HepG2 (cell line): ENCODE measurements at regions of chr4 and their contacts with region 1.

Region 1: GRCh38 chr4:145618932-145619638 is at the start of gene MMAA:
- DNase-seq: peak; percentile 83
- ATAC-seq: peak; percentile 99
- H3K4me3 ChIP-seq: peak within 1 kb of the TSS; percentile 80 to 91 (median 90)
- H3K27ac ChIP-seq: peak within 1 kb of the TSS; percentile 92
- H3K4me1 ChIP-seq: peaks cover 22% of the 10 kb centered on the region
- H3K27me3 ChIP-seq: no peaks in the 10 kb centered on the region; a peak in 1 of 5 replicates
- CTCF ChIP-seq: peak; percentile 81
- EP300 ChIP-seq: no peak
- POLR2A ChIP-seq: peak; percentile 88 to 94
- RAD21 ChIP-seq: peak; percentile 29
- total RNA-seq, gene MMAA: 2.8 and 4.5 TPM in 2 replicates

Region 2: GRCh38 chr4:145180298-145181090 is 438.6 kb before region 1 on chr4 and contains the start of gene OTUD4:
- CTCF ChIA-PET with region 1: no interaction called
- POLR2A ChIA-PET with region 1: interaction called, 4 read pairs
- in situ Hi-C with region 1: no loop called
- intact Hi-C with region 1: loop called (anchors 1 kb)
- DNase-seq: peak; percentile 87
- ATAC-seq: peak; percentile 92
- H3K4me3 ChIP-seq: peak within 1 kb of the TSS; percentile 76 to 84 (median 81)
- H3K27ac ChIP-seq: peak within 1 kb of the TSS; percentile 92
- H3K4me1 ChIP-seq: peaks cover 26% of the 10 kb centered on the region
- H3K27me3 ChIP-seq: peaks cover 0 to 4% of the 10 kb centered on the region in 2 experiments; a peak in 2 of 5 replicates
- CTCF ChIP-seq: peak; percentile 58
- EP300 ChIP-seq: no peak
- POLR2A ChIP-seq: peak; percentile 15 to 50; a peak in 1 of 4 replicates
- RAD21 ChIP-seq: no peak; the same call in 1 of the 2 replicates
- total RNA-seq, gene OTUD4: 16.1 and 21.1 TPM in 2 replicates

Region 3: GRCh38 chr4:145234091-145234706 is 384.9 kb before region 1 on chr4:
- CTCF ChIA-PET with region 1: interaction called, 8 read pairs
- POLR2A ChIA-PET with region 1: no interaction called
- in situ Hi-C with region 1: loop called (anchors 5 kb)
- intact Hi-C with region 1: loop called (anchors 2 kb)
- DNase-seq: peak; percentile 61
- ATAC-seq: peak; percentile 99
- H3K4me3 ChIP-seq: no peak overlapping the region
- H3K27ac ChIP-seq: no peak overlapping the region
- H3K4me1 ChIP-seq: no peaks in the 10 kb centered on the region
- H3K27me3 ChIP-seq: no peaks in the 10 kb centered on the region
- CTCF ChIP-seq: peak; percentile 79
- EP300 ChIP-seq: no peak
- POLR2A ChIP-seq: no peak
- RAD21 ChIP-seq: peak; percentile 77

Region 4: DNA sequence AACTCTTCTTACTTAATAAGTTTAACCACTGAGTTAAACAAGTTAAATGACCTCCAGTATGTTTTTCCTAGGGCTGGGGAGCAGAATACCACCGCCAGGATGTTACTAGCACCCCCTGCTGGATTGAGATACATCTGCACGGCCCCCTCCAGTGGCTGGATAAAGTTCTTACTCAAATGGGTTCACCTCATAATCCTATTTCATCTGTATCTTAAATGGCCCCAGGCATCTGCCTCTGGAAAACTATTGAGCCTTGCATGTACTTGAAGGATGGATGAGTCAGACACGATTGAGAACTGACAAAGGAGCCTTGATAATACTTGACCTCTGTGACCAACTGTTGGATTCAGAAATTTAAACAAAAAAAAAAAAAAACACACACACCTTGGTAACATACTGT is 61.4 kb before region 1 on chr4:
- CTCF ChIA-PET with region 1: no interaction called
- POLR2A ChIA-PET with region 1: no interaction called
- in situ Hi-C with region 1: no loop called
- intact Hi-C with region 1: loop called (anchors 5 kb)
- DNase-seq: peak; percentile 58
- ATAC-seq: peak; percentile 98
- H3K4me3 ChIP-seq: no peak overlapping the region
- H3K27ac ChIP-seq: no peak overlapping the region
- H3K4me1 ChIP-seq: no peaks in the 10 kb centered on the region
- H3K27me3 ChIP-seq: no peaks in the 10 kb centered on the region
- CTCF ChIP-seq: peak; percentile 80
- EP300 ChIP-seq: no peak
- POLR2A ChIP-seq: no peak
- RAD21 ChIP-seq: peak; percentile 73